ENCODE measurements at regions of chr12 and their contacts with region 1.

Region 1: DNA sequence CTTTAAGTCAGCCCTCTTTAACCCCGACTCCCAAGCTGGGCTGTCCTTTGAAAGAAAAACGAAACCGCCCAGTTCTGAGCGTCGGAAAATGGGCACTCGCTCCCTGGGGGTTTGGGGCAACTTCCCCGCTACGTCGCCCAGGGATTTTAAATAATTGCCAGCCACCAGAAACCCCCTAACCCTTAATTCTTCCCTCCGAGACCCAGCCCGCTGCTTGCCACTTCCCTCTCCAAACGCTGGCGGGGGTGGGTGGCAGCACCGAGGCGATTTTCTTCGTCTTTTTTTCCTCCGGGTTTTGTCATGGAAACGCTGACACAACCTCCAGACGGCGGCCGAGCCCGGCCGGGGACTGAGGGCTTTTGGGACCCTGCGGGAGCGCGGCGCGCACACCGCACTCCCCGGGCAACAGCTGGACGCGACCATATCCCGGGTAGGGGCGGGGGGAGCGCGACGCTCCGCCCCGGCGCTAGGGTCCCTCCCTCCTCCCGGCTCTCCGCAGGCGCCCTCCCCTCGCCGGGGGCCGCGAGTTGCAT is at the start of gene CHST11:
- DNase-seq: peak; percentile 94
- H3K4me3 Mint-ChIP-seq: peak within 1 kb of the TSS; percentile 99
- H3K27ac Mint-ChIP-seq: peak within 1 kb of the TSS; percentile 97
- H3K4me1 Mint-ChIP-seq: peaks cover 40% of the 10 kb centered on the region
- H3K27me3 Mint-ChIP-seq: peaks cover 2% of the 10 kb centered on the region
- total RNA-seq, gene CHST11: 44.9 and 46.2 TPM in 2 replicates

Region 2: GRCh38 chr12:104381731-104382480 is 74.6 kb before region 1 on chr12:
- intact Hi-C with region 1: loop called (anchors 2 kb)
- DNase-seq: peak; percentile 94
- H3K4me3 Mint-ChIP-seq: no peak overlapping the region
- H3K27ac Mint-ChIP-seq: peak overlapping the region; percentile 18
- H3K4me1 Mint-ChIP-seq: peaks cover 17% of the 10 kb centered on the region
- H3K27me3 Mint-ChIP-seq: peaks cover 10% of the 10 kb centered on the region

Region 3: DNA sequence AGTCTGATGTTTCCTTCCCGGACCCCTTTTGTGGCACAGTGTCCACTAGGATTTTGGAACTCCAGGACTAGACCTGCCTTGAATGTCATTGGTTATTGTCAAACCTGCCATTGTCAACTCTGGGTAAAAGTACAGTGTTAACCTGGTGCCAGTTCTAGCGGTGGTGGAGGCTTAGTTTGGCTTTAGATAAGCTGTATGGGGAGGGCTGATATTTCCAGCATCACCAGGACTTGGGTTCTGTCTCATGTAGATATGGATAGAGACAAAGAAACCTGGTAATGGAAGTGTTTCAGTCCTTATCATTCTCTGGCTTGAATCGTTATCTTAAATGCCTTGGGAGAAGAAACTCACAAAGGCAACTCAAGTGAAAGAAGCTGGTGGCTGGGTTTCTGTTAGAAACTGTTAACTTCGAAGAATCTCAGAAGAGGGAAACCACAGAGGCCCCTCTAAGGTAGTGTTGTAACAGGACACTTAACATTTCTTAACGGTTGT is 10.9 kb after region 1 on chr12:
- intact Hi-C with region 1: no loop called
- DNase-seq: no peak
- H3K4me3 Mint-ChIP-seq: peak overlapping the region; percentile 38
- H3K27ac Mint-ChIP-seq: peak overlapping the region; percentile 35
- H3K4me1 Mint-ChIP-seq: peaks cover 72% of the 10 kb centered on the region
- H3K27me3 Mint-ChIP-seq: no peaks in the 10 kb centered on the region

Region 4: DNA sequence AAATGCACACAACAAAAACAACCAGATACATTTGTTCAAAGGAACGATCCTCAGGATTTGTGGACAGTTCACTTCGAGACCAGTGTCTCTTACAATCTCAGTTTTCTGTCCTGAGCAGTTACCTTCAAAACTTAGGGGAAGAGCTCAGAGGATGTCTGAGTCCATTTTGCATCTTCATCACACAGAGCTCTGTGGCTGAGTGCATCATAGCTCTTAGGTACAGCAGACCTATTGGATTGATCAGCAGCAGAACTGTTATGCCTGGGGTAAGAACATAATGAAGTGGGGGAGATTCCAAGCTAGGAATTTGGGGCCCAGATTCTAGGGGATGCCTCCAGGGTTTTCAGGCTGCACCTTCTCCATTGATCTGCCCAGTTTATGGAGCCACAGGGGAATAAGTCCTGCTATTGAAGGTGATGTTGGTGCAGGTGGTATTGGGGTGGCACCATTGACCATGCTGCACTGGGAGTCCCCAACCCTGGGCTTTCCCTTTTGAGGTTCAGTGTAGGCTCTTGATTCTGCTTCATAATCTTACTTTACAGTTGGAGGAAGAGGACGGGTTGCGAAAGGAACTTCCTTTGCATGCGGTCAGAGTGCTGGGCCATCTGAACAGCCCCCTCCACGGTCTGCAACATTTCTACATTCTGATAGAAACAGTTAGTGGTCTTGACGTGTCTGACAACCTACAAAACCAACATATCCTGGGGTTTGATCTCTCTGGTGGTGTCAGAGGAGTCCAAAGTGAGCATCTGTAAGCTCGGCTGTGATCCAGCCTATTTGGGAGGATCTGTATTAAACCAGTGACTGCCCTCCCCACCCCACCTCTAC is 113.1 kb after region 1 on chr12:
- intact Hi-C with region 1: loop called (anchors 2 kb)
- DNase-seq: peak; percentile 86
- H3K4me3 Mint-ChIP-seq: peak overlapping the region; percentile 66
- H3K27ac Mint-ChIP-seq: peak overlapping the region; percentile 83
- H3K4me1 Mint-ChIP-seq: peaks cover 53% of the 10 kb centered on the region
- H3K27me3 Mint-ChIP-seq: no peaks in the 10 kb centered on the region

Region 5: DNA sequence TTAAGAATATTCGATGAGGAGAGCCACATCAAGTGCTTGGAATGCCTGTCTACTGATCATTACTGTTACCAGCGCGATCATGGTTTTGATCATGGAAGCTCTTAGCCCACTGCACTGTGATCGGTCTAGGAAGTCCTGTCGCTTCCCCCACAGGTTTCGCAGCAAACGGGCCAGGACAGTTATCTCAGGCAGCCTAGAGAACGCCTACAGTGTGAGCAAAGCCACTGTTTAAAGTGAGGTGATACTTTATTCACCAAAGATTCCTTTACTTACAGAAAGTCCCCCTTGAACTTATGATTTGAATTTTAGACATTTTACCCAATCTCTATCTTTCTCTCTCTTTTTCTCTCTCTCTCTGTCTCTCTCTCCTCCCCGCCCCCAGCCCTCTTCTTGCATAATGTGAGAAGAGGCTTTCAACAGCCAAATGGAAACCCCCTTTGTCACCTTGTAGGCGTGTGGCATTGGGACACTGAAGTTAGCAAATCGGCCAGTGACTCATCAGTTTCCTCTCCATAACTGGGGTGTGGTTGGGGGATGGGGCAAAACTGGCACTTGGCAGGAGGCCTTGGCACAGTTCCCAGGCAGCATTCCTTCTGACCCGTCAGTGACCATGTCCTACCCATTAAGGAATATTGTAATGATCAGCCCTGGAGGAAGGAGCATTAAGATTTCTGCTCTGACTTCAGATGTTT is 215.1 kb after region 1 on chr12:
- intact Hi-C with region 1: loop called (anchors 2 kb)
- DNase-seq: peak; percentile 92
- H3K4me3 Mint-ChIP-seq: peak overlapping the region; percentile 57
- H3K27ac Mint-ChIP-seq: peak overlapping the region; percentile 89
- H3K4me1 Mint-ChIP-seq: peaks cover 59% of the 10 kb centered on the region
- H3K27me3 Mint-ChIP-seq: no peaks in the 10 kb centered on the region

Region 6: GRCh38 chr12:104958009-104958945 is 501.8 kb after region 1 on chr12 and contains the start of gene SLC41A2:
- intact Hi-C with region 1: loop called (anchors 5 kb)
- DNase-seq: peak; percentile 95
- H3K4me3 Mint-ChIP-seq: peak within 1 kb of the TSS; percentile 85
- H3K27ac Mint-ChIP-seq: peak within 1 kb of the TSS; percentile 92
- H3K4me1 Mint-ChIP-seq: peaks cover 29% of the 10 kb centered on the region
- H3K27me3 Mint-ChIP-seq: peaks cover 39% of the 10 kb centered on the region
- total RNA-seq, gene SLC41A2: 11.5 and 12.3 TPM in 2 replicates

Measured in activated CD4-positive, alpha-beta T cell treated with anti-CD3 and anti-CD28 coated beads, Interleukin-2, amount 10 ng/mL, durations not matched to agents 24 days and 14 days (primary cell).